ENCODE measurements at regions of chr18 and their contacts with region 1.

Region 1: DNA sequence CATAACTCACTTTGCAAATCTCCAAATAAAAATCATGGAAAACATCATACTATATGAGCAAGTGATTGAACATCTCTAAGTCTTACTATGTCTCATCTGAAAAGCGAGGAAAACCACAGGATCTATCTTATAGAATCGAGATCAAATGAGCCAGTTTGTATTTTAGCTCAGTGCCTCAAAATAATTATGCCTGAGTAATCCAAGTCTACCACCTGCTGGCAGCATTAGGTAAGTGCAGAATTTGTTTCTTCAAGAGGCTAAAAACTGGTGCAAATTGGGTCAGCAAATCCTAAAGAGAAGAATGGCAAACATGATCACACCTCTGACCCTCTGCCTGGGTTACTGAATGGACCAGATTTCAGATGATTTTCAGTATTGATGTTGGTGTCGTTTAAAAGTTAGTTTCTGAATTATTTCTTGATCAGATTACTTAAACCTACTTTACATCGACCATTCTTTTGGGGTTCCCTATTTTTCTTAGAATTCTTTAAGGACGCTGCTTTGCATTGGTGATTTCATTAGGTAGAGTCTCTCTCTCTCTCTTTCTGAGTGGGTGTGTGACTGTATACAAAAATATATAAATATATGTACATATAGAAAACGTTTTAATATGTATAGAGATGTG is 12.7 kb upstream of the FHOD3 start:
- DNase-seq: peak; percentile 62
- ATAC-seq: peak; percentile 53
- H3K4me3 ChIP-seq: no peak overlapping the region
- H3K27ac ChIP-seq: no peak overlapping the region
- H3K4me1 ChIP-seq: 0 out of 2 replicates have a peak, but pooled peaks cover 7% of the 10 kb centered on the region
- H3K27me3 ChIP-seq: no peaks in the 10 kb centered on the region
- CTCF ChIP-seq: peak; percentile 86
- EP300 ChIP-seq: no peak
- POLR2A ChIP-seq: no peak
- RAD21 ChIP-seq: peak; percentile 81

Region 2: DNA sequence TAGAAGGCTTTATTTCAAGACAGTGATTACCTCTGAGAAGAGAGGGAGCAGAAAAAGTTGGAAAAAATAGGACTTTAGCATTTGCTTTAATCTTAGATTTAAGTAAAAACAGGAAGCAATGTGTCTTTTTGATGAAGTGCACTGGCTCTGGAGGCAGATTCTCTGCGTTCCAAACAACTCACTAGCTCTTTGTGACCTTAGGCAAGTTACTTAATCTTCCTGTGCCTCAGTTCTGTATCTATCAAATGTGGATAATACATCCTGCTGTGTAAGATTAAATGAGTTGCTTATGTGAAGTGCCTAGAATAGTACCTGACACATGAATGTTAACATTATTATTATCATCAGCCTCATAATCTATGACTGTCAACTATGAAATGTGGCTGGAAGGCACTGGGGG is 259.8 kb before region 1 on chr18:
- CTCF ChIA-PET with region 1: no interaction called
- POLR2A ChIA-PET with region 1: no interaction called
- in situ Hi-C with region 1: loop called (anchors 10 kb)
- intact Hi-C with region 1: no loop called
- DNase-seq: no peak
- ATAC-seq: no peak
- H3K4me3 ChIP-seq: no peak overlapping the region
- H3K27ac ChIP-seq: no peak overlapping the region
- H3K4me1 ChIP-seq: peaks cover 14% of the 10 kb centered on the region
- H3K27me3 ChIP-seq: no peaks in the 10 kb centered on the region
- CTCF ChIP-seq: no peak
- EP300 ChIP-seq: no peak
- POLR2A ChIP-seq: no peak
- RAD21 ChIP-seq: no peak

Measured in HepG2 (cell line).